ENCODE measurements at regions of chr5 and their contacts with region 1.

Region 1: DNA sequence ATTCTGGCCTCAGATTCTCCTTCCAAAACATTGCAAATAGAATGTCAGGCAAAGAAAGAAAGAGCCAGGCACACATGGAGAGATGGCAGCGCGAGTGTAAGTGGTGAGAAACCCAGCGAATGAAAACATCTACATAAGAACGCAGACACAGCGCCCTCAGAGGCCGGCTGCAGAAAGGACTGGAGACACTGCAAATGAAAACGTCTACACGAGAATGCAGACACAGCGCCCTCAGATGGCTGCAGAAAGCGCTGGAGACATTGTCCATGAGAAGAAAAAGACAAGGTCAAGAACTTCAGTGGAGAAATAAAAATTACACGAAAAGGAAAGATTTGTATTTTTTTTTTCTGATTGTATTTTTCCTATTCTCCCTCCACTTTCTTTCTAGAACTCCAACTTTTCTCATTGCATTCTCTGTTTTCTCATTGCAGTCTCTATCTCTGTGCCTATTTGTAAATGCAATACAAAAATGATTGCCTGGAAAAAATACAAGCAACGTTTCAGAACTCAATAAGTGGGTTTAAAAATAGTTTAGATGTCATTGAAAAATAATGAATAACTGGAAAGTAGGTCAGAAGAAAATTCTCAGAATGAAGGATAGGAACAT is 117.9 kb upstream of the LPCAT1 start:
- DNase-seq: peak; percentile 77 to 87
- ATAC-seq: peak; percentile 86

Region 2: DNA sequence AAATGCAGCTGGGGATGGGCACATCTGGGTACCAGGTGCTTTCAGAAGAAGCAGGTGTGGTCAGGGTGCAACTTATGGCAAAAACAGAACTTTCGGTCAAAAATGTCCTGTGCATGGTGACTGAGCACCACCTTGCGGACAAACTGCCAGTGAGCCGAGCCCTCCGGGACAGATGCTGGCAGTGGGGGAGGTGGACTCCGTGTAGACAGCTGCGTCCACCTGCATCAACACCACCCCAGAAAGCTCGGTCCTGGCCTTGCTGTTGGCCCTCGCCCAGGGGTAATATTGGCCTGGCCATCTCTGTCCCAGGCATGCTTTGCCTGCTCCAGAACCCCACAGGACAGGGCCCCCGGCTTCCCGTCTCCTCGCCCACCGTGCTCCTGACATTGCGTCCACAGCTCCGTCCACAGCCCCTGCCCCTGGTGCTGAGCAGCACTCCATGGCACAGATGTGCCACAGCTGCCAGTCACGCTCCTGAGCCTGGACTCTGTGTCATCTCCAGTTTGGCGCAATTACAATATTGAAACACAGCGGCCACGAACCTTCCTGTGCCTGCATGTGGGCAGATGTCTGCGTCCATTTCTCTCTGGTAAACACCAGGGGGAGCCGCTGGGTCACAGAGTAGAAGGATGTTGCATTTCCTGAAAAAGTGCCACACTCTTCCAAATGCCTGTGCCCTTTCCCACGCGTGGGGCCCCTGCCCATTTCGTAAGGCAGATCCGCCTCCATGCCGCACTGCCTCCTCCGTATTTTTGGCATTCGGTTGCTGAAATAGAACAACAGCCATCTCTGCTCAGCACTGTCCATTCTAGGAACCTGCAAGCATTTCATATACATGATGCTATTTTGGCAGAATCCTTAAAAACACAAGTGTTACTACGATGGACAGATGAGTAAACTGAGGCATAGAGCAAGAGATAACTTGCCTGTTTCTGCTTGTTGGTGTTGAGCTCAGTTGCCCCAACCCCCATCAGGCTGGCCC is 473.6 kb before region 1 on chr5:
- intact Hi-C with region 1: loop called in 1 of 2 experiments (anchors 10 kb)
- DNase-seq: peak; percentile 62 to 79
- ATAC-seq: peak; percentile 85

Region 3: DNA sequence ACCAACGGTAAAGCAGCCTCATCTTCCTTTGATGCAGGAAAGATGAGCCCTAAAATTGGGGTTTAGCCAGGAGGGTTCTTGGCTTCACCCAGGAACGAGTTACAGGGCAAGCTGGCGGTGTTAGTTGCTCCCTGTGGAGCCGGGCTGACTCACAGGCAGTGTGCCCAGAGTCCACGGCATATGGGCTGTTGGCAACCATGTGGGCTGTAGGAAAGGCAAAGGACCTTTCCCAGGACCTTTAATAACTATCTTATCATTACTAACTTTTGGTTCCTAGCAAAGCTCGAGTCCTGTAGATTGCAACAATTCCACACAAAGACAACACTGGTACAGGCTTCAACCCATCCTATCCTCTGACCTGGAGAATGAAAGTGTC is 267.0 kb before region 1 on chr5:
- intact Hi-C with region 1: loop called in 1 of 2 experiments (anchors 5 kb)
- DNase-seq: no peak
- ATAC-seq: no peak